ENCODE measurements at regions of chr2 and their contacts with region 1.

Region 1: DNA sequence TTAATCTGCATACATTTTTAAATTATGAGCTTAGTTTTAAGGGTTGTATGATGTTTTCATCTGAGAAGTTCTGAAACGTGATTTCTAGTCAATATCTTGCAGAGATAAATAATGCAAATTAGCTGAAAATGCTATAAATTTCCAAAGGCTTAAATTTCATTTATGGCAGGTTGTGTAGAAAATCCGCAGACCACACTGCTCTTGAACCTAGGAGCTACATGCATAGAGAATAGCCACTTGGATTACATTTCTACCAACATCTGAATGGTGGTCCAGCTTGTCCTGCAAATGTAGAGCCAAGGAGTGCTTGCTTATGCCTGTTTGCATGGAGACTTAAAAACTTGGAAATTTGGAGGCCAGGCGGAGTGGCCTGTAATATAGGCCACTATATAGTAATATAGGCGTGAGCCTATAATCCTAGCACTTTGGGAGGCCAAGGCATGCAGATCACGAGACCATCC is 6.8 kb downstream of the MAT2A start:
- DNase-seq: no peak
- ATAC-seq: no peak
- H3K4me3 Mint-ChIP-seq: no peak overlapping the region
- H3K27ac Mint-ChIP-seq: peak overlapping the region; percentile 15; the same call in 1 of the 2 replicates
- H3K4me1 Mint-ChIP-seq: peaks cover 43% of the 10 kb centered on the region
- H3K27me3 Mint-ChIP-seq: no peaks in the 10 kb centered on the region
- CTCF ChIP-seq: no peak

Region 2: GRCh38 chr2:85561317-85561979 is 15.6 kb after region 1 on chr2 and contains the start of gene GGCX:
- CTCF ChIA-PET with region 1: interaction called, 26 read pairs
- POLR2A ChIA-PET with region 1: interaction called, 12 read pairs
- DNase-seq: peak; percentile 98
- ATAC-seq: peak; percentile 97
- H3K4me3 Mint-ChIP-seq: peak within 1 kb of the TSS; percentile 94
- H3K27ac Mint-ChIP-seq: peak within 1 kb of the TSS; percentile 98
- H3K4me1 Mint-ChIP-seq: peaks cover 6% of the 10 kb centered on the region
- H3K27me3 Mint-ChIP-seq: peaks cover 7% of the 10 kb centered on the region; the same call in 1 of the 2 replicates
- CTCF ChIP-seq: no peak
- total RNA-seq, gene GGCX: 40.9 to 42.9 TPM (median 41.4 TPM) in 3 replicates

Measured in WTC11 (cell line).